Common myeloid progenitor, CD34-positive (primary cell): ENCODE measurements at regions of chr4 and their contacts with region 1.

Region 1: GRCh38 chr4:5037553-5038551 is 13.4 kb upstream of the STK32B start:
- DNase-seq: peak; percentile 77 to 97 (median 94)
- H3K4me3 ChIP-seq: peak overlapping the region in 2 of 7 experiments; percentile 3 to 4
- H3K27ac ChIP-seq: peak overlapping the region; percentile 17 to 59
- H3K4me1 ChIP-seq: peaks cover 28 to 67% (median 56%) of the 10 kb centered on the region in 4 experiments
- H3K27me3 ChIP-seq: no peaks in the 10 kb centered on the region

Region 2: GRCh38 chr4:4762909-4763821 is 274.7 kb before region 1 on chr4:
- CTCF ChIA-PET with region 1: no interaction called
- POLR2A ChIA-PET with region 1: no interaction called
- DNase-seq: peak; percentile 61 to 89 (median 86)
- H3K4me3 ChIP-seq: peak overlapping the region in 3 of 7 experiments; percentile 2 to 30 (median 12)
- H3K27ac ChIP-seq: no peak overlapping the region
- H3K4me1 ChIP-seq: peaks cover 0 to 18% (median 14%) of the 10 kb centered on the region in 4 experiments
- H3K27me3 ChIP-seq: peaks cover 0 to 23% (median 5%) of the 10 kb centered on the region in 5 experiments

Region 3: DNA sequence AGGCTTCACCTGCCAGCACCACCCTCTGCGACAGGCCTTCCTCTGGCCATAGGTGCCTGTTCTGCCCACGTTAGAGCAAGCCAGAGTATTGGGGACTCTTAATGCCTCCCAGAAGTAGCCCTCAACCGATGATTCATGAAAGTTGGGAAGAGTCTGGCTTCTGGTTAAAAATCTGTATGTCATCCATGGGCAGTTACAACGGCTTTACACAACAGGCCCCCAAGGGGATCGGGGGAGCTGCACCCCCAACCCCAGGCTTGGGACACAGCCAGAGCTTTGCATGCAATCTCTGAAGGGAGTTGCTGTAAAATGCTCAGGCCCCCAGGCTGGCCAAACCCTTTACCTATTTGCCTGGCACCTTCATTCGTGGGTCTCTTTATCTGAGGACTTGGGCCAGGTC is 13.2 kb before region 1 on chr4:
- CTCF ChIA-PET with region 1: interaction called, 13 read pairs
- POLR2A ChIA-PET with region 1: interaction called, 4 read pairs
- DNase-seq: no peak
- H3K4me3 ChIP-seq: no peak overlapping the region
- H3K27ac ChIP-seq: no peak overlapping the region
- H3K4me1 ChIP-seq: peaks cover 0 to 25% (median 17%) of the 10 kb centered on the region in 4 experiments
- H3K27me3 ChIP-seq: no peaks in the 10 kb centered on the region

Region 4: GRCh38 chr4:5365071-5366008 is 327.5 kb after region 1 on chr4:
- CTCF ChIA-PET with region 1: no interaction called
- POLR2A ChIA-PET with region 1: no interaction called
- DNase-seq: peak in 1 of 3 donors; percentile 7
- H3K4me3 ChIP-seq: no peak overlapping the region
- H3K27ac ChIP-seq: no peak overlapping the region
- H3K4me1 ChIP-seq: no peaks in the 10 kb centered on the region
- H3K27me3 ChIP-seq: no peaks in the 10 kb centered on the region